Heart right ventricle (tissue), 16 donors: ENCODE measurements at regions of chr16 and their contacts with region 1.

Region 1: GRCh38 chr16:83826146-83826913 is 18.6 kb downstream of the HSBP1 start:
- DNase-seq: peak; percentile 83 to 86
- ATAC-seq: peak; percentile 89 to 96 (median 92)
- H3K4me3 ChIP-seq: no peak overlapping the region
- H3K27ac ChIP-seq: no peak overlapping the region
- H3K4me1 ChIP-seq: peaks cover 0 to 7% (median 0%) of the 10 kb centered on the region in 9 donors
- H3K27me3 ChIP-seq: peaks cover 0 to 4% (median 0%) of the 10 kb centered on the region in 7 donors
- CTCF ChIP-seq: peak; percentile 83 to 95 (median 94)

Region 2: DNA sequence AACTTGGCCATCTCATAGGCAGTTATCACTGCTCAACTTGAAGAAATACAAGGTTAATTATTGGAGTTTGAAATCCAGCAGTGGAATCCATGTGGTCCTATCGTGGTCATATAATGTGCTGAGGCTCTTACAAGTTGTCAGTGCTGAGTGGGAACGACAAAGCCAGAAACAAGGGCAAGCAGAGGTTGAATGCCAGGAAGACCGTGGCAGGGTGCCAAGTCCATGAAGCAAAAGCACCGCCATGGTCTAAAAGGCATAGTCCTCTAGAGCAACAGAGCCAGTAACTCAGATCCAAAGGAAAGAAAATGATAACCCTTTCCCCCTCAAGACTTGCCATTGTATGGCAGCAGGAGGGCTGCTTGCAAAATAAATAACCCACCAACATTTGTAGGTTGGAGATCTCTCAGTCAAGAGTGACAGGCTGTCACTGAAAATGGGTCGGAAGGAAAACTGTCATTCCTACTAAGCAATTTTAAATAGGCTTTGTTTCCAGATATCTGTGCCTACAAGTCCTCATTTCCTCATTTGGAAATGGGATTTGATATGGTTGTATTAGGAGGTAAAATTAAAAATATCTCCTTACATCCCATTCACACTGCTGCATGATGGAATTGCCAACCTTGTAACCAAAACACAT is 54.9 kb before region 1 on chr16:
- intact Hi-C with region 1: no loop called
- DNase-seq: peak; percentile 77 to 78
- ATAC-seq: peak; percentile 73 to 90 (median 86)
- H3K4me3 ChIP-seq: no peak overlapping the region
- H3K27ac ChIP-seq: peak overlapping the region in 8 of 10 donors; percentile 15 to 60 (median 44)
- H3K4me1 ChIP-seq: peaks cover 0 to 46% (median 14%) of the 10 kb centered on the region in 9 donors
- H3K27me3 ChIP-seq: no peaks in the 10 kb centered on the region
- CTCF ChIP-seq: no peak

Region 3: DNA sequence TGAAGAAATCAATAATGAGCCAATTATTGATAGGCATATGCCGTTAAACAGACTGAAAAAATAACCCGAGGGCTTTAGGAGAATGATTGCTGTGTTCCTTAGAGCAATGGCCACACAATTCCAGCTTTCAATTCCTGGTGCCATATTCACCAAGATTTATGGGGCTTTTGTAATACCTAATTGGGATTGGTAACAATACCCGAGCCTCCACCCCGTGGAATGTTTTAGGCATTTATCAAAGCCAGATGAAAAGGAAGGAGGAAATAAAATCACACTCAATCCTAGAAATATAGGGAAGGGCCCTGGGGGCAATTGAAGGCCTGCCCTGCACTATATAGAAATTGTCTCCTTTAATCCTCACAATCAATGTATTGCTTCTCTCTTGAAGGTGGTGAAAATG is 30.5 kb after region 1 on chr16:
- intact Hi-C with region 1: no loop called
- DNase-seq: no peak
- ATAC-seq: no peak
- H3K4me3 ChIP-seq: no peak overlapping the region
- H3K27ac ChIP-seq: no peak overlapping the region
- H3K4me1 ChIP-seq: no peaks in the 10 kb centered on the region
- H3K27me3 ChIP-seq: peaks cover 0 to 4% (median 0%) of the 10 kb centered on the region in 7 donors
- CTCF ChIP-seq: no peak

Region 4: DNA sequence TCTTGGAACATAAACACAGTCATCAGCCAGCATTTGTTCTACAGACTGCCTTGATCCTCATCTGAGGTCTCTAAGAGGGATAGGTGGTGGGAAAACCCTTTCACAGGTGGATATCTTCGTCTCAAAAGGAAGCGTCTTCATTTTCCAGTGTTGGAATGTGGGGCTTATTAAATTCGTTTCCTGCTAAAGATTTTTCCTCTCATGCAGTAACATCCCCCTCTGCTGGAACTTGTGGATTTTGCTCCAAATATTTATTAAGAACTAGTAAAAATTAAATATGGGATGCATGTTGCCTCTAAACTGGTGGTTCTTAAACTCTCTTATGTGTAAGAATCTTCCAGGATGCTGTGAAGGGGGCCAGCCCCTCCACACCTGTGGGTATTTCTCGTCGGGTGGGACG is 52.5 kb after region 1 on chr16:
- intact Hi-C with region 1: loop called (anchors 2 to 10 kb)
- DNase-seq: no peak
- ATAC-seq: no peak
- H3K4me3 ChIP-seq: no peak overlapping the region
- H3K27ac ChIP-seq: no peak overlapping the region
- H3K4me1 ChIP-seq: peaks cover 0 to 9% (median 0%) of the 10 kb centered on the region in 9 donors
- H3K27me3 ChIP-seq: peaks cover 0 to 23% (median 12%) of the 10 kb centered on the region in 7 donors
- CTCF ChIP-seq: peak; percentile 21 to 70 (median 54)

Region 5: GRCh38 chr16:83887081-83887480 is 60.8 kb after region 1 on chr16:
- intact Hi-C with region 1: loop called in 4 of 10 experiments (anchors 5 to 10 kb)
- DNase-seq: no peak
- ATAC-seq: no peak
- H3K4me3 ChIP-seq: no peak overlapping the region
- H3K27ac ChIP-seq: no peak overlapping the region
- H3K4me1 ChIP-seq: peaks cover 0 to 12% (median 0%) of the 10 kb centered on the region in 9 donors
- H3K27me3 ChIP-seq: no peaks in the 10 kb centered on the region
- CTCF ChIP-seq: no peak

Region 6: GRCh38 chr16:83926726-83927397 is 100.5 kb after region 1 on chr16:
- intact Hi-C with region 1: loop called in 2 of 10 experiments (anchors 10 kb)
- DNase-seq: peak; percentile 58 to 76
- ATAC-seq: peak; percentile 49 to 76 (median 70)
- H3K4me3 ChIP-seq: no peak overlapping the region
- H3K27ac ChIP-seq: no peak overlapping the region
- H3K4me1 ChIP-seq: peaks cover 0 to 33% (median 17%) of the 10 kb centered on the region in 9 donors
- H3K27me3 ChIP-seq: no peaks in the 10 kb centered on the region
- CTCF ChIP-seq: peak; percentile 87 to 97 (median 96)

Region 7: DNA sequence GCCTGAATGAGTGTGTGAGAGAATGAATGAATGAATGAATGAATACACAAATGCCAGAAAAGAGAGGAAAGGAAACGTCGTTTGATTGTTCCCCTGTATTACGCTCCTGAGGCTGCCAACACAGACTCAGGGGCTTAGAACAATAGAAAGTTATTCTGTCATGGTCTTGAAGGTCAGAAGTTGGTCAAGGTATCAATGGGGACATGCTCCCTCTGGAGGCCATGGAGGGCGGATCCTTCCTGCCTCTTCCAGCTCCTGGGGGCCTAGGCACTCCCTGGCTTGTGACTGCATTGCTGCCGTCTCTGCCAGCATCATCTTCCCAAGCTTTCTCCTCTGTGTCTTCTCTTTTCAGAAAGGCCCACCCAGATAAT is 217.8 kb after region 1 on chr16:
- intact Hi-C with region 1: loop called in 1 of 10 experiments (anchors 10 kb)
- DNase-seq: no peak
- ATAC-seq: peak in 2 of 8 donors; percentile 29 to 63
- H3K4me3 ChIP-seq: no peak overlapping the region
- H3K27ac ChIP-seq: no peak overlapping the region
- H3K4me1 ChIP-seq: peaks cover 0 to 17% (median 6%) of the 10 kb centered on the region in 9 donors
- H3K27me3 ChIP-seq: peaks cover 0 to 40% (median 6%) of the 10 kb centered on the region in 7 donors
- CTCF ChIP-seq: peak in 6 of 9 donors; percentile 23 to 44 (median 32)

Region 8: DNA sequence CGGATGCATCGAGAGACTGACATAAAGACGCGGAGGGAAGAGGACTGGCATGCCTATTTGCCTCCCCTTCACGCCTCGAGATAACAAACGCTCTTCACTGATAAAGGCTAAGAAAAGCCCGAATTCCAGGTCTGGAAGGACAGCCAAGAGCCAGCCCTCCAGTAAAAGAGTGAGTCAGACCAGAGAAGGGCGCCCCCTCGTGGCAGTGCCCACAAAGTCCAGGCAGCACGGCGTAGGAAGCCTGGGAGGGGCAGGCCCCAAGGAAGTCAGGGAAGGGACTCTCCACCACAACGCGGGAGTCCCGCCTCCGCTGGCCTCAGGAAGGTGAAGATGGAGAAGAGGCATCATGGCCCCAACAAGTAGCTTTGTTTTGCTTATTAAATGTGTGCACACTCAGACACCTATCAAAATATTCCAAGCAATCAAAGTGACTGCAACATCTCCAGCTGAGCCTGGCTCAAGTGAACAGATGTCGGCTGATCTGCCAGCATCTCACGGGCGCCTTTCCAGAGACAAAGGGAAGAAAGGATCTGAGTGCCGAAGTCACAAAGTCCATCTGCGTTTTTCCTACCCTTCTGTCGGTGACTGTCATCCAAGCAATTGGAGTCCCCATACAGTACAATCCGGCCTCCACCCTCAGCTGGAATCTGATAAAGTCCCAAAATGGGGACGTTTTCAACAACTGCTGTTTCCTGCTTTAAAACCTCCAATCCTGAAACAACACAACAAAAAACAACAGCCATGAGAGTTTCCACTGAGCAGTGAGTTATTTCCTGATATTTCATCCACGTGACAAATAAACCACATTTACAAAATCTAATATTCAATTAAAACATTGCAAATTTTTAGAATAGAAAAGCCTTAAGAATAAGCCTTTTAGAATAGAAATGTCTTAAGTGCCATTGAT is 236.7 kb after region 1 on chr16:
- intact Hi-C with region 1: loop called in 8 of 10 experiments (anchors 5 to 10 kb)
- DNase-seq: peak; percentile 79 to 81
- ATAC-seq: peak; percentile 81 to 92 (median 86)
- H3K4me3 ChIP-seq: no peak overlapping the region
- H3K27ac ChIP-seq: peak overlapping the region in 3 of 10 donors; percentile 3 to 21 (median 10)
- H3K4me1 ChIP-seq: peaks cover 0 to 28% (median 16%) of the 10 kb centered on the region in 9 donors
- H3K27me3 ChIP-seq: no peaks in the 10 kb centered on the region
- CTCF ChIP-seq: peak; percentile 78 to 91 (median 87)

Region 9: DNA sequence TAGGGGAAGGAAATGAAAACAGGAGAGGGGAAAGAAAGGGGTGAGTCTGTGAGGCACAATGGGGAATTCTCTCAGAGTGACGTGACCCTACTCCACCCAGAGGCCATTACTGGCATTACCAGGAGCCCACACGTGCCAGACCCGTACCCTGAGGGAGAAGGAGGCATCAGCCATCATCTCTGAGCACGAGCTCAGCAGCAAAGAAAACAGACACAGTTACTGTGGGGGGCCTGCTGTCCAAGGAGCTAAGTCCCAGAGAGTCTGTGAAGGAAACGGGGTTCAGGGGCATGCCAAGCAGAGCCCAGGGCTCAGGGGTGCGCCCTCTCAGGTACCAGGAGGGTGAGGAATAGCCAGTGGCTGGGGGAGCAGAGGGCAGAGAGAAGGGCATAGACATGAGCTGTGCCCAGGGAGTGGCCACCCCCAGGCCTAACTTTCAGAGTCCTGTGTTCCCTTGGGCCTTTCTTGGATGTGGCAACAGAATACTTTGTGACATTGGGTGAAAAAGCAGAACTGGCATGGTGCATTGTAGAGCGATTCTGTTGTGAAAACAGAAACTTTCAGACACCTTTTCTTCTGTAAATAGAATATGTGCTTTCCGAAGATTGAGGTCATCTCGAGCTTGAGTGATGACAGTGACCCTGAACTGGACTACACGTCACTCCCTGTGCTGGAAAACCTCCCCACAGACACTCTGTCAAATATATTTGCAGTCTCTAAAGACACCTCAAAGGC is 349.2 kb after region 1 on chr16:
- intact Hi-C with region 1: loop called in 1 of 10 experiments (anchors 5 kb)
- DNase-seq: no peak
- ATAC-seq: peak in 4 of 8 donors; percentile 27 to 68 (median 47)
- H3K4me3 ChIP-seq: no peak overlapping the region
- H3K27ac ChIP-seq: peak overlapping the region in 9 of 10 donors; percentile 22 to 91 (median 87)
- H3K4me1 ChIP-seq: peaks cover 27 to 56% (median 43%) of the 10 kb centered on the region in 9 donors
- H3K27me3 ChIP-seq: no peaks in the 10 kb centered on the region
- CTCF ChIP-seq: peak in 7 of 9 donors; percentile 50 to 81 (median 59)